H1 (cell line): ENCODE measurements at regions of chr4 and their contacts with region 1.

Region 1: GRCh38 chr4:154626793-154627484 is 14.5 kb upstream of the FGG start:
- DNase-seq: peak; percentile 62 to 80
- H3K4me3 ChIP-seq: peak overlapping the region; percentile 49 to 69 (median 50)
- H3K27ac ChIP-seq: no peak overlapping the region
- H3K4me1 ChIP-seq: peaks cover 0 to 6% (median 1%) of the 10 kb centered on the region in 4 experiments; a peak in 2 of 7 replicates
- H3K27me3 ChIP-seq: peaks cover 1 to 22% (median 11%) of the 10 kb centered on the region in 4 experiments
- CTCF ChIP-seq: peak; percentile 66 to 96 (median 71)
- EP300 ChIP-seq: no peak
- POLR2A ChIP-seq: no peak
- RAD21 ChIP-seq: peak; percentile 60 to 68

Region 2: GRCh38 chr4:154566639-154567204 is 60.2 kb before region 1 on chr4:
- CTCF ChIA-PET with region 1: interaction called, 47 read pairs
- POLR2A ChIA-PET with region 1: no interaction called
- DNase-seq: no peak
- H3K4me3 ChIP-seq: no peak overlapping the region
- H3K27ac ChIP-seq: no peak overlapping the region
- H3K4me1 ChIP-seq: no peaks in the 10 kb centered on the region
- H3K27me3 ChIP-seq: no peaks in the 10 kb centered on the region
- CTCF ChIP-seq: no peak
- EP300 ChIP-seq: no peak
- POLR2A ChIP-seq: no peak
- RAD21 ChIP-seq: no peak

Region 3: DNA sequence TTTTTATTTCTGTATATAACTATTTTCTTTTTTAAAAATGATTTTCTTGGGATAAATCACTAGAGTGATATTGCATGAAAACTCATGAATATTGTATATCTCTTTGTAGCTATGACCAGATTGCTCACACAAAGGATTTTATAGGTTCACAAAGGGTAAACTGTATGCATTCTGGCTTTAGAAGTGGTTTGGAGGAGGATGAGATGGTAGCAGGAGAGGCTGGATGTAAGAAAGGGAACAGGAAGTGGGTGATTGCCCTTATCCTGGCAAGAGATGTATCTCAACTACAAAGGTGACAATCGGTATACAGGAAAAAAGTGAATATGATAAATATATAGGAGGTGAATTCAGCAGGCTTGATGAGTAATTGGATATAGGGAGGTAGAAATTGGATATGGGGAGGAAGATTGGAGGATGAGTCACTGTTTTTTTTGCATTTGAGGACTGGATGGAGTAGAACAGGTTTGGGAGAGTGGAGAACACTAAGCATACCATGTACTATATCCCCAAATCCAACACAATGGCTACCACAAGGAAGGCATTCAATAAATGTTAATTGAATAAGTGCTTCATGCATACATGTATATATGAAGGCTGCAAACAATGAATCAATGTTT is 24.4 kb before region 1 on chr4:
- CTCF ChIA-PET with region 1: interaction called, 10 read pairs
- POLR2A ChIA-PET with region 1: no interaction called
- DNase-seq: no peak
- H3K4me3 ChIP-seq: no peak overlapping the region
- H3K27ac ChIP-seq: no peak overlapping the region
- H3K4me1 ChIP-seq: peaks cover 0 to 3% (median 0%) of the 10 kb centered on the region in 4 experiments; a peak in 1 of 7 replicates
- H3K27me3 ChIP-seq: no peaks in the 10 kb centered on the region
- CTCF ChIP-seq: no peak
- EP300 ChIP-seq: no peak
- POLR2A ChIP-seq: no peak
- RAD21 ChIP-seq: no peak